Right ventricle myocardium inferior (tissue), 1 donor: ENCODE measurements at regions of chr11 and their contacts with region 1.

Region 1: GRCh38 chr11:76083563-76084451 is 122.5 kb downstream of the WNT11 start:
- DNase-seq: no peak
- ATAC-seq: peak; percentile 3

Region 2: DNA sequence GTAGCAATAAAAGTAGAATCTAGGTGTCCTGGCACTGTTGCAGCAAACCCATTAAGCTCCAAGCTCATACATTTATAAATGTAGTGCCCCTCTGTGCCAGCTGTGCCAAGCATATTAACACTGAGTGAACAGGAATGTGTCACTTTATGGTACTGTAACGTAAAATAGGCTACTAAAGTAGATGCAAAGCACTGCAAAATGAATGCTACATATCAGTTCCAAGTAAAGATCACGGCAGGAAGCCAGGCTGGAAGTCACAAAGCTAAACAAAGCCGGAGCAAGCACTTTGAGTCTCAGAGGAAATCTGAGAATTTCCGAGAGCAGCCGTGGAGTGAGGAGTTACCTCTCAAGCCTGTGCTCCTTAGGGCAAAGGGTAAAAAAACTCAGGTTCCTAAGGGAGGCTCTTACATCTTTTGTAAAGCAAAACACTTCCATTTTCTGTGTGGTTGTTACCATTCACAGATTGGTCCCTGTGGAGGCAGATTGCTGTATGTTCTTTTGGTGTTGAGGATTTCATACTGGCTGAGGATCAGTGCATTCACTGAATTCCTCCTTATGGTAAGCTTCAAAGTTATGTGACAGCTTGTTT is 36.8 kb after region 1 on chr11:
- intact Hi-C with region 1: loop called (anchors 2 kb)
- DNase-seq: no peak
- ATAC-seq: peak; percentile 47